ENCODE measurements at regions of chr22 and their contacts with region 1.

Region 1: DNA sequence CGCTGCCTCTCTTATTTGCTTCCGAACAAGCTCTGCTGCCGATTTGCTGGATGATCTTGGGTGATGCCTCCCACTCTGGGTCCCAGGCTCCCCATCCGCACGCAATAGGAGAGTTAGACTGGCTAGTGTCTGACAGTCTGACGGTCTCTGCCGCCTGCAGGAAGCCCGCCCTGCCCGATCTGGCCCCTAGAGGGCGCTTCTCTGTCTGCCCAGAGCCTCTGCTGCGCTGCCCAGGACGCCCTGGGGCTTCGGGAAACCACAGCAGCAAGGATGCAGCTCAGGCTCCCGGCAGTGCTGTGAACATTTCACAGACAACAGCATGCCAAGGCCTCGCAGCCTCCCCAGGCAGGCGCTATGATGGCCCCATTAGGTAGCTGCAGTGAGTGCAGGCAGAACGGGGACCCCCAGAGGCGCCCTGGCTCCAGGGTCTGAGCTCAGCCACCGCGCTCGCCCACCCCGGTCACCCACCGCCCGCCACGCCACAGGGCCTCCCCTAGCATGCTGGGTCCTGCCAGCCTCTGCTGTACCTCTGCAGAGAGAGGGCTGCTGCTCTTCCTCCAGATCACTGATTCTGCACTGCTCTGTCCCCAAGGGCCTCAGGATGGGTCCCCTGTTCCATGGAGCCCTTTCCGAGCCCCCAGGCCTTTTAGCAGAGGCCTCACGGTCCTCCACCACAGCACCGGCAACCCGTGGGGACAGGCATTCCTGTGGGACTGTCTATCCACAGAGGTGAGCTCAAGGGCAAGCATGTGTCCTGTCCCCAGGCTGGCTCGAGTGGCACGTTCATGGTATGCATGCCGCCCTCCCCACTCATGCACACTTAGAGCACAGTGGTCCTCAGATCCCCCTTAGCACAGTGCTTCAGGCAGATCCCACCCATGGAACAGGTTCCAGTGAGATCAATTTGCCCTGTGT is 4.3 kb upstream of the BAIAP2L2 start:
- DNase-seq: peak; percentile 86 to 95 (median 92)
- ATAC-seq: peak; percentile 57
- H3K4me3 ChIP-seq: no peak overlapping the region
- H3K4me1 ChIP-seq: peaks cover 18% of the 10 kb centered on the region
- CTCF ChIP-seq: peak; percentile 96

Region 2: GRCh38 chr22:38051900-38052862 is 62.6 kb before region 1 on chr22:
- intact Hi-C with region 1: no loop called
- DNase-seq: peak; percentile 80 to 81 (median 81)
- ATAC-seq: peak; percentile 79
- H3K4me3 ChIP-seq: no peak overlapping the region
- H3K4me1 ChIP-seq: no peaks in the 10 kb centered on the region
- CTCF ChIP-seq: peak; percentile 83

Region 3: GRCh38 chr22:38246692-38247091 is 132.0 kb after region 1 on chr22:
- intact Hi-C with region 1: no loop called
- DNase-seq: no peak
- ATAC-seq: no peak
- H3K4me3 ChIP-seq: no peak overlapping the region
- H3K4me1 ChIP-seq: peaks cover 17% of the 10 kb centered on the region
- CTCF ChIP-seq: no peak

Region 4: GRCh38 chr22:38353142-38353629 is 238.4 kb after region 1 on chr22:
- intact Hi-C with region 1: loop called in 1 of 2 experiments (anchors 10 kb)
- DNase-seq: peak; percentile 73 to 87 (median 80)
- ATAC-seq: peak; percentile 93
- H3K4me3 ChIP-seq: no peak overlapping the region
- H3K4me1 ChIP-seq: peaks cover 5% of the 10 kb centered on the region
- CTCF ChIP-seq: peak; percentile 99

Measured in mucosa of descending colon (tissue), 3 donors.